Uterus (tissue), 4 donors: ENCODE measurements at regions of chr7 and their contacts with region 1.

Region 1: GRCh38 chr7:116588641-116589594 is 64.1 kb downstream of the CAV1 start:
- DNase-seq: no peak
- H3K4me3 ChIP-seq: no peak overlapping the region
- H3K27ac ChIP-seq: peak overlapping the region; percentile 15 to 57
- H3K4me1 ChIP-seq: no peaks in the 10 kb centered on the region
- H3K27me3 ChIP-seq: no peaks in the 10 kb centered on the region
- CTCF ChIP-seq: peak; percentile 65 to 86 (median 78)
- POLR2A ChIP-seq: no peak

Region 2: DNA sequence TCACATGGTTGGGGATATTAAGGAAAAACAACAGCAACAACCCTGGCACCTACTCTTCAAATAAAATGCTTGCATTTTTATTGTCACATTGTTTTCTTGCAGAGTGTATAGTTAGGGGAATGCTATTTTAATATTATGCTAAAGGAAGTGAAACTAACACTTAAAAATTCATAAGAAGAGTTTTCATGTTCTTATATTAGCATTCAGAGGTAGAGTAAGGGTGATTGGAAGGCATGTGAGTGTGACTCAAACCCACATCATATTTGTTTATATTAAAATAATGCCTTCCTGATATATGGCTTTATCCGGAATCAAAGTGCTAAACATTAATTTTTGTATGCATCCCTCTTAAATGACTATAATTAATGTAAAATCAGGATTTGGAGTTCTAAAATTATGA is 438.3 kb before region 1 on chr7:
- intact Hi-C with region 1: no loop called
- DNase-seq: no peak
- H3K4me3 ChIP-seq: no peak overlapping the region
- H3K27ac ChIP-seq: no peak overlapping the region
- H3K4me1 ChIP-seq: no peaks in the 10 kb centered on the region
- H3K27me3 ChIP-seq: no peaks in the 10 kb centered on the region
- CTCF ChIP-seq: no peak
- POLR2A ChIP-seq: no peak

Region 3: DNA sequence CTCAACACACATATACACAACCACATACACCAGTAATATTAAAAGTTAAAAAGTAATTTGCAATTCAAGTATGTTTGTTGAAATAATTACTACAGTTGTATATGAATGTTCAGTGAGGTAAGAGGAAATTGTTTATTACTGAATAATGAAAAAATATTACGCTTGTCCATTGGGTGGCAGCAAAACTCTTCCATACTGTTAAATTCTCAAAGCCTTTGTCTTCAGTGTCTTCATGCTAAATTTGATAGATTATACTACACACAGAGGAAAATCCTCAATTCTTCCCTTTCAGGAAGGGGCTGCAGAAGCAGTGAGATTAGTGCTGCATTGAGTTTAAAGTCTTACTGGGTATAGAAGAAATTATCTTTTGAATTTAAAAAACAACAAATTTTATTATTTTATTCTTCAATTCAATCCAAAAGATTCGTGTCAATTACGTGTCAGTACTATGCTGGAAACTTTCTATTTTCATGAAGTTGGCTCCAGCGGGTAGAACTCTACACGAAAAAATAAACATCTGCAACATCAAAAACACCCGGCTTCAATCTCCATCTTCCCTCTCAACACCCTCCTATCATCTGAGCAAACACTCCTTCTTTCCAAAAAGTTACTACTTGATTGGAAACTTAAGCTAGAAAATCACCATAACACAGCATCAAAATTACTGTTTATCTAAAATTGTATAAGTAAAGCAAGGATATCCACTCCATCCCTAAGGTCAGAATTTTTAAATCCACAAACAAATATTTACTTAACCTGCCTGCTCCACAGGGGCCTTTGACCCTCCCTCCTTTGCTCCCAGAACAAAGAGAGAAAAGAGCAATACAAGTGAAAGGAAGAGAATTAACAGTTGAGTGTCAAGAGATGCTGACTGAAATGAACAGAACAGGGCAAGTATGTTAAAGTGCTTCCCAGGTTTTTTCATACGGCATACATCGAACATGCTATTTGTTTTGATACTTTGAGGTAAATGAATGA is 415.6 kb before region 1 on chr7:
- intact Hi-C with region 1: loop called (anchors 10 kb)
- DNase-seq: no peak
- H3K4me3 ChIP-seq: no peak overlapping the region
- H3K27ac ChIP-seq: no peak overlapping the region
- H3K4me1 ChIP-seq: no peaks in the 10 kb centered on the region
- H3K27me3 ChIP-seq: no peaks in the 10 kb centered on the region
- CTCF ChIP-seq: peak; percentile 46 to 73 (median 58)
- POLR2A ChIP-seq: no peak

Region 4: GRCh38 chr7:116258734-116259133 is 330.2 kb before region 1 on chr7:
- intact Hi-C with region 1: loop called (anchors 5 kb)
- DNase-seq: peak in 1 of 2 donors; percentile 33
- H3K4me3 ChIP-seq: no peak overlapping the region
- H3K27ac ChIP-seq: peak overlapping the region in 1 of 2 donors; percentile 52
- H3K4me1 ChIP-seq: no peaks in the 10 kb centered on the region
- H3K27me3 ChIP-seq: no peaks in the 10 kb centered on the region
- CTCF ChIP-seq: peak; percentile 73 to 93 (median 86)
- POLR2A ChIP-seq: no peak

Region 5: GRCh38 chr7:116525913-116526861 is 62.7 kb before region 1 on chr7:
- intact Hi-C with region 1: loop called (anchors 10 kb)
- DNase-seq: peak; percentile 79 to 83
- H3K4me3 ChIP-seq: peak overlapping the region; percentile 62 to 73
- H3K27ac ChIP-seq: peak overlapping the region; percentile 96
- H3K4me1 ChIP-seq: peaks cover 0 to 11% of the 10 kb centered on the region in 2 donors
- H3K27me3 ChIP-seq: no peaks in the 10 kb centered on the region
- CTCF ChIP-seq: peak; percentile 67 to 93 (median 86)
- POLR2A ChIP-seq: peak; percentile 76

Region 6: GRCh38 chr7:116809636-116810266 is 220.8 kb after region 1 on chr7:
- intact Hi-C with region 1: loop called (anchors 10 kb)
- DNase-seq: no peak
- H3K4me3 ChIP-seq: no peak overlapping the region
- H3K27ac ChIP-seq: no peak overlapping the region
- H3K4me1 ChIP-seq: peaks cover 0 to 4% of the 10 kb centered on the region in 2 donors
- H3K27me3 ChIP-seq: no peaks in the 10 kb centered on the region
- CTCF ChIP-seq: peak; percentile 49 to 80 (median 70)
- POLR2A ChIP-seq: no peak